Mammary epithelial cell (primary cell): ENCODE measurements at regions of chr2 and their contacts with region 1.

Region 1: DNA sequence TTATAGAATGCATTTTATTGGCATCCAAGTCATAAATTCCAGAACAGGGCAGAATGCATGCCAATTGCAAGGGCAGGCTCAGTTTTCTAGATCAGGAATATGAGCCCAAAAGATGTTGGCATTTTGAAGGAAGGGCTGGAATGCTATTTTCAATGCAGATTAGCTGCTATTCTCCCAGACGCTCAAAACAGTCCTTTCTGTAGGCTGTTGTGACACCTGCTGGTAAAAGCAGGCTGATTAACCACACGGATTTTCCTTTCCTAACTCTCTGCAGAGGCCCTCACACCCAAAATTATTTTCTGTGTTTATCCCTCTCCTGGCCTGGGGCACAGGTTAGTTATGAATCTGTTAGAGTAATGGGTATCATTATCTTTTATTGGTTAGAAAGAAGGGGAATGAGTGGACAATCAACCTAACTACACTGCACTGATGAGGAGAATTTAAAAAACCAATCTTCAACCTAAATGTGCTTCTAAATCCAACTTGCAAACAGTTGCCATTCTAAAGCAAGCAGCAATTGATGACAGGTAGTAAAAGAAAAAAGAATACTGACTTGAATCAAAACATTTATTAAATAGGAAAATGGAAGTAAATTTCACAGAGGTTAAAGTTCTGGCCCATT is 94.0 kb downstream of the PLA2R1 start:
- DNase-seq: peak; percentile 39
- H3K4me3 ChIP-seq: no peak overlapping the region
- H3K27ac ChIP-seq: no peak overlapping the region
- H3K4me1 ChIP-seq: peaks cover 9% of the 10 kb centered on the region
- H3K27me3 ChIP-seq: no peaks in the 10 kb centered on the region
- CTCF ChIP-seq: peak; percentile 51 to 59

Region 2: GRCh38 chr2:158893026-158893425 is 1075.4 kb before region 1 on chr2:
- CTCF ChIA-PET with region 1: no interaction called
- dilution Hi-C with region 1: no loop called
- in situ Hi-C with region 1: no loop called
- intact Hi-C with region 1: loop called (anchors 10 kb)
- DNase-seq: peak; percentile 90
- H3K4me3 ChIP-seq: no peak overlapping the region
- H3K27ac ChIP-seq: peak overlapping the region; percentile 96
- H3K4me1 ChIP-seq: peaks cover 55% of the 10 kb centered on the region
- H3K27me3 ChIP-seq: no peaks in the 10 kb centered on the region
- CTCF ChIP-seq: no peak

Region 3: GRCh38 chr2:159516241-159516766 is 452.1 kb before region 1 on chr2:
- CTCF ChIA-PET with region 1: no interaction called
- dilution Hi-C with region 1: no loop called
- in situ Hi-C with region 1: no loop called
- intact Hi-C with region 1: loop called (anchors 1 kb)
- DNase-seq: peak; percentile 80
- H3K4me3 ChIP-seq: peak overlapping the region; percentile 38 to 56 (median 48)
- H3K27ac ChIP-seq: peak overlapping the region; percentile 82
- H3K4me1 ChIP-seq: peaks cover 10% of the 10 kb centered on the region
- H3K27me3 ChIP-seq: no peaks in the 10 kb centered on the region
- CTCF ChIP-seq: peak in 1 of 2 donors; percentile 32

Region 4: DNA sequence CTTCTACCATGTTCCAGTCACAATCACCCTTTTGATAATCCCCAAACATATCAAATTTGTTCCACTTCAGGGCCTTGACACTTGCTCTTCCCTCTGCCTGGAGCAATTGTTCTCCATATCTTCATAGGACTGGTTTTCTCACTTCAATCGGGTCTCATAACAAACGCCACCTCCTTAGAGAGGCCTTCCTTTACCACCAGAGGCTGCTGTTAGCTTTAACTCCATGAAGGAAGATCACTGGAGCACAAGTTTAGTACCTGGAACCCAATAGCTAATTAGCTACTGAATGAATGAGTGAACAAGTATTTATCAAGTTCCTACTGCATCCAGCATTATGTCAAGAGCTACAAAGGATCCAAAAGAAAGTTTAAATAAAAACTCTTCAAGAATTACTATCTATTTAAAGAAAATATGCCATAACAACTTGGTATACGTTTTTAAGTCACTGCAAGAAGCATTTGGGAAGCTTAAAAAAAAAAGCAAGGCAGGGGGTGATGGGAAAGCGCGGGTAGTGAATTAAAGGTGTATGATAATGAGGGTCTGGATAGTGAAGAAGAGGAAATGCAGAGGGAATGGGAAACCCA is 410.8 kb before region 1 on chr2:
- CTCF ChIA-PET with region 1: no interaction called
- dilution Hi-C with region 1: no loop called
- in situ Hi-C with region 1: no loop called
- intact Hi-C with region 1: loop called (anchors 1 kb)
- DNase-seq: peak; percentile 40
- H3K4me3 ChIP-seq: no peak overlapping the region
- H3K27ac ChIP-seq: no peak overlapping the region
- H3K4me1 ChIP-seq: no peaks in the 10 kb centered on the region
- H3K27me3 ChIP-seq: no peaks in the 10 kb centered on the region
- CTCF ChIP-seq: peak; percentile 57 to 80

Region 5: DNA sequence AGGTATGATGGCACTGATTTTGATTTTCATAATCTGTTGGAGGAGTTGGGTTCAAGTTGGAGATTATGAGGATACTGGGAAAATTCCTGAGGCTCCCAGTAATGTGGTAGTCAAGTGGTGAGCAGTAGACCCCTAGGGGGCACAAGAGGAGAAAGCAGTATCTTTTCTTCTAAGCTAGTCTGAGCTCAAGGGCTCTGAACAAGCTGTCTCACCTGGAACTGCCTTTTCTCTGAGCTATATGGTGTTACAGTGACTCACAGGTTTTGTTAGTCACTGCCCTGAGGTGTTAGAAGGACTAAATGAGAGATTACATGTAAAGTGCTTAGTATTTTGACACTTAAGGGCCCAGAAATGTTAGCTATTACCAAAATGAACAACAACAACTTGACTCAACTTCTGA is 212.6 kb before region 1 on chr2:
- CTCF ChIA-PET with region 1: no interaction called
- dilution Hi-C with region 1: no loop called
- in situ Hi-C with region 1: no loop called
- intact Hi-C with region 1: loop called (anchors 10 kb)
- DNase-seq: peak; percentile 98
- H3K4me3 ChIP-seq: no peak overlapping the region
- H3K27ac ChIP-seq: peak overlapping the region; percentile 12
- H3K4me1 ChIP-seq: peaks cover 12% of the 10 kb centered on the region
- H3K27me3 ChIP-seq: no peaks in the 10 kb centered on the region
- CTCF ChIP-seq: peak; percentile 56 to 60

Region 6: DNA sequence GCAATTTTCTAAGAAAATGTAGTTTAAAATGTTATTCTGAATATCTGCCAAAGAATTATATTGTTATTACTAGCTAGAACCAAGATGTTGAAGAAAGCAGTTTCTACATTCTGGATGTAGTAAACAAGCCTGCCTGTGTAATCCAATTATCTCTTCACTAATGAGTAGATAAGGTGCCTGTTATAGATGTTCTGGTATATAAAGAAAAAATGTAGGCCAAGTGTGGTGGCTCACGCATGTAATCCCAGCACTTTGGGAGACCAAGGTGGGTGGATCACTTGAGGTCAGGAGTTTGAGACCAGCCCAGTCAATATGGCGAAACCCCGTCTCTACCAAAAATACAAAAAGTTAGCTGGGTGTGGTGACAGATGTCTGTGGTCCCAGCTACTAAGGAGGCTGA is 199.2 kb before region 1 on chr2:
- CTCF ChIA-PET with region 1: no interaction called
- dilution Hi-C with region 1: no loop called
- in situ Hi-C with region 1: no loop called
- intact Hi-C with region 1: no loop called
- DNase-seq: no peak
- H3K4me3 ChIP-seq: no peak overlapping the region
- H3K27ac ChIP-seq: no peak overlapping the region
- H3K4me1 ChIP-seq: no peaks in the 10 kb centered on the region
- H3K27me3 ChIP-seq: no peaks in the 10 kb centered on the region
- CTCF ChIP-seq: no peak

Region 7: GRCh38 chr2:159807183-159808031 is 161.0 kb before region 1 on chr2:
- CTCF ChIA-PET with region 1: no interaction called
- dilution Hi-C with region 1: no loop called
- in situ Hi-C with region 1: no loop called
- intact Hi-C with region 1: loop called (anchors 5 kb)
- DNase-seq: peak; percentile 32
- H3K4me3 ChIP-seq: no peak overlapping the region
- H3K27ac ChIP-seq: no peak overlapping the region
- H3K4me1 ChIP-seq: no peaks in the 10 kb centered on the region
- H3K27me3 ChIP-seq: no peaks in the 10 kb centered on the region
- CTCF ChIP-seq: peak; percentile 79